ENCODE measurements at regions of chr14 and their contacts with region 1.

Region 1: GRCh38 chr14:77862154-77862786 is 62.4 kb downstream of the ADCK1 start:
- DNase-seq: peak; percentile 73
- H3K4me3 ChIP-seq: no peak overlapping the region
- H3K27ac ChIP-seq: no peak overlapping the region
- H3K4me1 ChIP-seq: no peaks in the 10 kb centered on the region
- H3K27me3 ChIP-seq: no peaks in the 10 kb centered on the region
- CTCF ChIP-seq: peak; percentile 75 to 97 (median 93)
- EP300 ChIP-seq: no peak
- POLR2A ChIP-seq: no peak

Region 2: DNA sequence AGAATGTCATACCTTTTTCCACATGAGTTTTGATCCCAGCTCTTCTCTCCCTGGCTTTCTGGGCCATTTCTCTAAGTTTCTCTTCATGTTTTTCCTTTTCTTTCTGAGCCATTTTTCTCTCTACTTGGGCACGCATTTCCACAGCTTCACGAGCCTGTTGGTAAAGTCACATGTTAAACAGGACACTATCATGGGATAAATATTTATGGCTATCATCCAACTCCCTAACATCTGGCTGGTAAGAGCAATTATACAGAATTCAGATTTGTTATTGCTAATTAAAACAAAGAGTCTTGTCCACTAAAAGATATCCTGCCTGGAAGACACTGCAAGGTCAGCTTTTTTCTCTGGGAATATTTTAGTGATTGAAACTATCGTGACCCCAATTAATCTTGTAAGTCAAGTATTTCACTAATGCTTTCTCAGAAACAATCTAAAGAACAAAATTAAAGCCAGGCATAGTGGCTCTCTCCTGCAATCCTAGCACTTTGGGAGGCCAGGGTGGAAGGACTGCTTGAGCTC is 131.2 kb before region 1 on chr14:
- in situ Hi-C with region 1: no loop called
- intact Hi-C with region 1: no loop called
- DNase-seq: no peak
- H3K4me3 ChIP-seq: no peak overlapping the region
- H3K27ac ChIP-seq: no peak overlapping the region
- H3K4me1 ChIP-seq: no peaks in the 10 kb centered on the region
- H3K27me3 ChIP-seq: no peaks in the 10 kb centered on the region
- CTCF ChIP-seq: no peak
- EP300 ChIP-seq: no peak
- POLR2A ChIP-seq: no peak

Region 3: GRCh38 chr14:78566026-78566858 is 704.0 kb after region 1 on chr14:
- in situ Hi-C with region 1: loop called in 1 of 4 experiments (anchors 25 kb)
- intact Hi-C with region 1: loop called (anchors 10 kb)
- DNase-seq: peak; percentile 67
- H3K4me3 ChIP-seq: no peak overlapping the region
- H3K27ac ChIP-seq: no peak overlapping the region
- H3K4me1 ChIP-seq: peaks cover 0 to 5% (median 2%) of the 10 kb centered on the region in 4 donors
- H3K27me3 ChIP-seq: no peaks in the 10 kb centered on the region
- CTCF ChIP-seq: peak; percentile 50 to 63 (median 56)
- EP300 ChIP-seq: no peak
- POLR2A ChIP-seq: no peak

Region 4: DNA sequence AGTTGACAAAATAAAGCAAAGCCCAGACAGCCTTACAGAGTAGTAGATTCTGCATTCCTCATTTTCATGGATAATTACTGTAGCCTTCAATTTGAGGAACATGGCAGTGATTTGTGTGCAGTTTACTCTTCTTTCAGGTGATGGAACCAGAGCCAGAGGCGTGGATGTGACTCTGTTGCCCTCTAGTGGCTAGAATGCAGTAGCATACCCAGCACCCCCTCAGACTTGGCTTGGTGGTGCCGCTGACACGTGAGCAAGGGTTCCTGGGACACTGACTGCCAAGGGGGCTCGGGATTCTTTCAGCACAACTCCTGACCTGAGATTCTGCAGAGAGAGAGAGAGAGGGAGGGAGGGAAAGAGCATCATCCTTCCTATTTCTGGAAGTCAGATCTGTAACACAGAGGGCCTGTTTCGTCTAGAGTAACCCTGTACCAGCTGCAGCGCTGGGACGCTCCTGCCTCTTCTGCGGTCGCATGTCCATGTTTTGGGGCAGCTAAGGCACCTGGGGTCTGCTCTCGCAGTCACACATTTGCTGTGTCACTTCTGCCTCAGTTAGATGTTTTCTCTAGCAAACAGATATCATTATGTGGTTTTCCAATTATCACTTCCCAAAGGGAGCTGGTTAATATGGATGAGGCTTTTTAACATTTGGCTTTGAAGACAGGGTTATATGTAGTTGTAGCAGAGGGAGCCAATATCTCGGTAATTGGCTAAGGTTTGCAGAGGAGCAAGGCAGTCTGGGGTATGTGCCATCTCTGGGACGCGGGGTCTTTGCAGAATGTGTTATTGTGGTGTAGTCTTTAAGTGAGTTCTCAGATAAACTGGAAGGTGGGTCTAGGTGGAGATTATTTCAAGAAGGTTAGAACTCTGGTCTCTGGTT is 736.0 kb after region 1 on chr14:
- in situ Hi-C with region 1: loop called in 2 of 4 experiments (anchors 25 kb)
- intact Hi-C with region 1: no loop called
- DNase-seq: peak; percentile 18
- H3K4me3 ChIP-seq: no peak overlapping the region
- H3K27ac ChIP-seq: no peak overlapping the region
- H3K4me1 ChIP-seq: no peaks in the 10 kb centered on the region
- H3K27me3 ChIP-seq: no peaks in the 10 kb centered on the region
- CTCF ChIP-seq: peak; percentile 62 to 84 (median 78)
- EP300 ChIP-seq: no peak
- POLR2A ChIP-seq: no peak